ENCODE measurements at regions of chr7 and their contacts with region 1.

Region 1: GRCh38 chr7:32495298-32496176 is at the start of gene AVL9:
- DNase-seq: peak; percentile 98
- ATAC-seq: peak; percentile 89 to 94
- H3K4me3 ChIP-seq: peak within 1 kb of the TSS; percentile 76 to 98 (median 88)
- H3K27ac ChIP-seq: peak within 1 kb of the TSS; percentile 91 to 98 (median 96)
- H3K4me1 ChIP-seq: peaks cover 21% of the 10 kb centered on the region in 2 donors
- H3K27me3 ChIP-seq: no peaks in the 10 kb centered on the region
- CTCF ChIP-seq: peak in 1 of 5 experiments; percentile 5
- POLR2A ChIP-seq: peak; percentile 79 to 88
- total RNA-seq, gene AVL9: 22.3 to 27.6 (median 25.5) TPM

Region 2: DNA sequence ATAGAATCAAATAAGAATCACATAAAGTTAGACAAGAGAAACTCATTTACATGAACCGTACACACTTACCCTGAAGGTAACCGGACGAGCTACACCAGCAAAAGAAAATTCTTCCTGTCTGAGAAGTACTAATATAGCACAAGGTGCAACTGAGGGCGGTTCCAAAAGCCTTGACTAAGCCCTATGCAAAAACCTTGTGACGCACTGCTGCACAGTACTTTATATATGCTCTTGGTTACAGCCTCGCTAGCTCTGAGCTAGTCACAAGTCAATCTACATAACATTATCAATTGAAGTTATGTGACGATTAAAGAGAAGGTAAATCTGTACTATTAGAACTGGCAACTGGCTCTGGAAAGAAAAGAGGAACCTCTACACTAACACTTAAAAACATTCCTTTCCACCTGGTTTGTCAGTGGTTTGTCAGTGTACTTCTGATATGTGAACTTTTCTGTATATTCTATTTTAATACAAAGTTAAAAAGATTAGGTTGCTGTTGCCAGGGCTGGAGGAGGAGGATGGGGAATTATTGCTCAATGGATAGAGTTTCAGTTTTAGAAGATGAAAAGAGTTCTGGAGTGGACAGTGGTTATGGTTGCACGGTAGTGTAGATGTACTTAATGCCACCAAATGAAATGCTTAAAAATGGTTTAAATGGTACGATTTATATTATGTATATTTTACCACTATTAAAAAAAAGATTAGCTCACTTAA is 545.4 kb after region 1 on chr7:
- in situ Hi-C with region 1: no loop called
- intact Hi-C with region 1: loop called (anchors 10 kb)
- DNase-seq: peak; percentile 73
- ATAC-seq: peak; percentile 90 to 91
- H3K4me3 ChIP-seq: peak overlapping the region; percentile 54 to 68 (median 62)
- H3K27ac ChIP-seq: peak overlapping the region; percentile 84 to 95 (median 90)
- H3K4me1 ChIP-seq: peaks cover 55 to 61% of the 10 kb centered on the region in 2 donors
- H3K27me3 ChIP-seq: no peaks in the 10 kb centered on the region
- CTCF ChIP-seq: no peak
- POLR2A ChIP-seq: peak; percentile 71 to 92

Region 3: GRCh38 chr7:33076737-33077136 is 581.2 kb after region 1 on chr7:
- in situ Hi-C with region 1: loop called in 2 of 4 experiments (anchors 25 kb)
- intact Hi-C with region 1: no loop called
- DNase-seq: no peak
- ATAC-seq: no peak
- H3K4me3 ChIP-seq: no peak overlapping the region
- H3K27ac ChIP-seq: no peak overlapping the region
- H3K4me1 ChIP-seq: peaks cover 7 to 10% of the 10 kb centered on the region in 2 donors
- H3K27me3 ChIP-seq: no peaks in the 10 kb centered on the region
- CTCF ChIP-seq: no peak
- POLR2A ChIP-seq: no peak

Region 4: GRCh38 chr7:33128990-33129805 is 633.7 kb after region 1 on chr7 and contains the start of gene BBS9:
- in situ Hi-C with region 1: loop called in 1 of 4 experiments (anchors 25 kb)
- intact Hi-C with region 1: loop called (anchors 10 kb)
- DNase-seq: peak; percentile 86 to 89
- ATAC-seq: peak; percentile 99
- H3K4me3 ChIP-seq: peak within 1 kb of the TSS; percentile 78 to 96 (median 86)
- H3K27ac ChIP-seq: peak within 1 kb of the TSS; percentile 83 to 97 (median 90)
- H3K4me1 ChIP-seq: peaks cover 15 to 21% of the 10 kb centered on the region in 2 donors
- H3K27me3 ChIP-seq: no peaks in the 10 kb centered on the region
- CTCF ChIP-seq: peak in 2 of 5 experiments; percentile 5 to 19
- POLR2A ChIP-seq: peak; percentile 38 to 45
- total RNA-seq, gene BBS9: 3.5 to 6.5 (median 5.4) TPM